K562 (cell line): ENCODE measurements at regions of chr15 and their contacts with region 1.

Region 1: DNA sequence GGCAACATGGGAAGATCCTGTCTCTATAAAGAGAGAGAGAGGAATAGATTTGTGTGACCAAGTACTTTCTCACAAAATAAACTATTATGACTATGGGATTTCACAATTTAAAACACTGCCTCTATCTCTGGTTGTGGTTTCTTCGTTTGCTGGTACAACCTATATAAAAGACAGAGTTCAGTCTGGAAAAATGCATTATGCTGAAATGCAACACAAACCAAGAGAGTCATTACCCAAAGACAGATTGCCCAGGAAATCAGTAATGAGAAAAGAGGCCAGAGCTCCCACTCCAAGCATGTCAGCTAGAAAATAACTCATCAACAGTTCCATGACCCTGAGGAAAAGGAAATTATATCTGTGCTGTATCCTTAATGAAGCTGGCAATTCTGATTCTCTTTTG is 23.2 kb downstream of the GPR176 start:
- DNase-seq: no peak
- ATAC-seq: peak; percentile 35; the same call in 2 of the 3 replicates
- H3K4me3 ChIP-seq: no peak overlapping the region
- H3K27ac ChIP-seq: no peak overlapping the region; the same call in 1 of the 3 replicates
- H3K4me1 ChIP-seq: peaks cover 4 to 16% of the 10 kb centered on the region in 2 experiments; a peak in 4 of 5 replicates
- H3K27me3 ChIP-seq: peaks cover 0 to 5% of the 10 kb centered on the region in 2 experiments; a peak in 1 of 5 replicates
- CTCF ChIP-seq: no peak
- EP300 ChIP-seq: no peak
- POLR2A ChIP-seq: no peak
- RAD21 ChIP-seq: no peak

Region 2: GRCh38 chr15:39782441-39783138 is 114.3 kb before region 1 on chr15 and contains the start of gene FSIP1:
- CTCF ChIA-PET with region 1: no interaction called
- POLR2A ChIA-PET with region 1: no interaction called
- in situ Hi-C with region 1: no loop called
- intact Hi-C with region 1: no loop called
- DNase-seq: peak; percentile 97 to 98 (median 98)
- ATAC-seq: peak; percentile 99
- H3K4me3 ChIP-seq: peak within 1 kb of the TSS; percentile 78
- H3K27ac ChIP-seq: peak within 1 kb of the TSS; percentile 74
- H3K4me1 ChIP-seq: peaks cover 0 to 8% of the 10 kb centered on the region in 2 experiments; a peak in 3 of 5 replicates
- H3K27me3 ChIP-seq: no peaks in the 10 kb centered on the region
- CTCF ChIP-seq: peak in 1 of 3 experiments; percentile 30; a peak in 1 of 6 replicates
- EP300 ChIP-seq: no peak
- POLR2A ChIP-seq: peak; percentile 76
- RAD21 ChIP-seq: no peak
- polyA plus RNA-seq, gene FSIP1: 0.07 to 0.20 TPM

Region 3: DNA sequence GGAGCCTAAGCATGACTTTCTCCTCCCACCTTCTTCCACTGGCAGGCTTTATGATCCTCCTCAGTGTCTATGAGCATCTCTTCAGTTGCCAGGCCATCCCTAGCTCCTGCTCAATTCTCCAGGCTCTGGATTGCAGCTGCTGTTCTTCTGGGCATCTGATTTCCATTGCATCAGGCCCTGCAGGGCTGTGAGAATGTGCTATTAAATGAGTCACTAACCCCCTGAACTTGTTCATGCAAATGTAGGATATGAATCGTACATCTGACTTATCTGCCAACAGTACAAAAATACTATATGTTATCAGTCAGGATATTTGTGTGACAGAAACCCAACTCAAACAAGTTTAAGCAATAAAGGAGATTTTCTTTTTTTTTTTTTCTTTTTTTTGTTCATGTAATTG is 11.3 kb after region 1 on chr15:
- CTCF ChIA-PET with region 1: no interaction called
- POLR2A ChIA-PET with region 1: interaction called, 15 read pairs
- in situ Hi-C with region 1: no loop called
- intact Hi-C with region 1: no loop called
- DNase-seq: no peak
- ATAC-seq: no peak
- H3K4me3 ChIP-seq: no peak overlapping the region
- H3K27ac ChIP-seq: no peak overlapping the region
- H3K4me1 ChIP-seq: peaks cover 0 to 5% of the 10 kb centered on the region in 2 experiments; a peak in 1 of 5 replicates
- H3K27me3 ChIP-seq: 0 out of 5 replicates have a peak, but pooled peaks cover 0 to 8% of the 10 kb centered on the region in 2 experiments
- CTCF ChIP-seq: no peak
- EP300 ChIP-seq: no peak
- POLR2A ChIP-seq: no peak
- RAD21 ChIP-seq: no peak